ENCODE measurements at regions of chr9 and their contacts with region 1.

Region 1: GRCh38 chr9:98074115-98074990 is 17.8 kb downstream of the NANS start:
- DNase-seq: peak; percentile 63
- H3K4me3 ChIP-seq: no peak overlapping the region
- H3K27ac ChIP-seq: peak overlapping the region; percentile 14
- H3K4me1 ChIP-seq: peaks cover 17% of the 10 kb centered on the region
- CTCF ChIP-seq: peak; percentile 99

Region 2: DNA sequence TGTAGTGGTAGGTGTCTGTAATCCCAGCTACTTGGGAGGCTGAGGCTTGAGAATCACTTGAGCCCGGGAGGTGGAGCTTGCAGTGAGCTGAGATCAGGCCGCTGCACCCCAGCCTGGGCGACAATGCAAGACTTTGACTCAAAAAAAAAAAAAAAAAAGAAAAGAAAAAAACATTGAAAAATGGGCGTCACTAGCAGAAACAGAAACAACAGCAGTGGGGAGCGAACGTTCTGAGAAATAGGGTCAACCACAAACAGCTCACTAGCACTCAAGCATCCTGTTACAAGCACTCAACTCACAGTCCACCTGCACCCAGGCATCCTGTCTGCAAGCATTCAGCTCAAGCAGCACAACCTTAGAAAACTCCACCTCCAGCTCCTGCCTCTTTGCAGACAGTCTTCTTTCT is 27.5 kb after region 1 on chr9:
- CTCF ChIA-PET with region 1: no interaction called
- POLR2A ChIA-PET with region 1: interaction called, 3 read pairs
- intact Hi-C with region 1: loop called (anchors 2 kb)
- DNase-seq: peak; percentile 97
- H3K4me3 ChIP-seq: peak overlapping the region; percentile 59
- H3K27ac ChIP-seq: peak overlapping the region; percentile 95
- H3K4me1 ChIP-seq: peaks cover 98% of the 10 kb centered on the region
- CTCF ChIP-seq: no peak

Region 3: DNA sequence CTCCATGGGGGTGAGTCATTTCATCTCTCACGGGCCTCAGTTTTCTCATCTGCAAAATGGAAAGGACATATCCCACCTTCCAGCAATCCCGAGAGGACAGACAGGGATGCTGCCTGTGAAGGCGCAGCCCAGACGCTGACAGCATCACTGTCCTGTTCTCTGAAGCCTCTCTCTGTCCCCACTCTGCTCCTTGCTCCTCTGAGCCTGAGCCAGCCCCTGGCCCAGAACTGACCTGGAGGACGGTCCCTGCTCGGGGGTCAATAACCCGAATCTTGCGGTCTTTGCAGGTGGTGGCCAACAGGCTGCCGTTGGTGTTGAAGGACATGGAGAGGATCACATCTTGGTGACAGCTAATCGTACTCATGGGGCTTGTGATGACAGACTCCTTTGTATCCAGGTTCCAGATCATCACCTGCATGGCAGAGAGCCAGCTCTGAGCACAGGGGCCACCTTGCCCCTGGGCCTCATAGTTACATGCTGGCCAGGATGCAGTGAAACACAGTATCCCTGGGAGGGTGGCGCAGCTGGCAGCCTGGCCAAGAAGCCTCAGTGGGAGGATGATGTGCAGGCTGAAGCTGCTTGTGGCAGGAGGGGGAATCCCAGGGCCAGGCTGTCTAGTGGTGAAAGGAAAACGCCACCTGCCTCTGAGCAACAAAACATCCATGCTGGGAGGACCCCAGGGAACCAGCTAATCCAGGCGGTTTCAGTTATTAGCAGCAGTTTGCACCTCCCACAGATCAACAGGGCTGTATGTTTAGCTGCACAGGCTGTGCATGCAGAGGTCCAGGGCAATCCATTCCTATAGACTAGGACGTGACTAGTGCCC is 58.7 kb after region 1 on chr9:
- CTCF ChIA-PET with region 1: no interaction called
- POLR2A ChIA-PET with region 1: interaction called, 4 read pairs
- intact Hi-C with region 1: loop called (anchors 5 kb)
- DNase-seq: peak; percentile 38
- H3K4me3 ChIP-seq: no peak overlapping the region
- H3K27ac ChIP-seq: no peak overlapping the region
- H3K4me1 ChIP-seq: peaks cover 23% of the 10 kb centered on the region
- CTCF ChIP-seq: peak; percentile 37

Region 4: GRCh38 chr9:98192503-98193335 is 118.4 kb after region 1 on chr9 and contains the start of gene CORO2A:
- CTCF ChIA-PET with region 1: no interaction called
- POLR2A ChIA-PET with region 1: interaction called, 5 read pairs
- intact Hi-C with region 1: loop called (anchors 2 kb)
- DNase-seq: peak; percentile 69
- H3K4me3 ChIP-seq: peak within 1 kb of the TSS; percentile 74
- H3K27ac ChIP-seq: no peak within 1 kb of the TSS
- H3K4me1 ChIP-seq: peaks cover 16% of the 10 kb centered on the region
- CTCF ChIP-seq: peak; percentile 70
- total RNA-seq, gene CORO2A: 1.8 and 2.2 TPM in 2 replicates

Region 5: DNA sequence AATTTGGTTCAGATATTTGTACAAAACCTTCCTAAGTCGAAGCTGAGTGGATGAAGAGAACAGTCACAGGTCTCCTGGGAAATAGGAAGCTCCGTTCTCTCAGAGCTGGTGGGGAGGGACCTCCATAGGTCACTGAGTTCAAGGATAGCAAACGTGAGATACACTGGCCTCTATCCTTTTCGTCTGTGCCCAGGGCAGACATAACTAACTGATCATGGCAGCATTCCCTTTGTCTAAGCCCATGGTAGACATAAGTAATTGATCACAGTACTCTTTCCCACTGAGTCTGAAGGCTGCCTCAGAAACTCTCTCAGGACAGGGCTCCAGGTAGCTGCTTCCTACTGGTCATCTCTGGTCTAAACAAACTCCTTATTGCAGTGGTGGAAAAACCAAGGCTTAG is 130.3 kb after region 1 on chr9:
- CTCF ChIA-PET with region 1: no interaction called
- POLR2A ChIA-PET with region 1: no interaction called
- intact Hi-C with region 1: loop called (anchors 2 kb)
- DNase-seq: no peak
- H3K4me3 ChIP-seq: no peak overlapping the region
- H3K27ac ChIP-seq: no peak overlapping the region
- H3K4me1 ChIP-seq: peaks cover 21% of the 10 kb centered on the region
- CTCF ChIP-seq: no peak

Region 6: DNA sequence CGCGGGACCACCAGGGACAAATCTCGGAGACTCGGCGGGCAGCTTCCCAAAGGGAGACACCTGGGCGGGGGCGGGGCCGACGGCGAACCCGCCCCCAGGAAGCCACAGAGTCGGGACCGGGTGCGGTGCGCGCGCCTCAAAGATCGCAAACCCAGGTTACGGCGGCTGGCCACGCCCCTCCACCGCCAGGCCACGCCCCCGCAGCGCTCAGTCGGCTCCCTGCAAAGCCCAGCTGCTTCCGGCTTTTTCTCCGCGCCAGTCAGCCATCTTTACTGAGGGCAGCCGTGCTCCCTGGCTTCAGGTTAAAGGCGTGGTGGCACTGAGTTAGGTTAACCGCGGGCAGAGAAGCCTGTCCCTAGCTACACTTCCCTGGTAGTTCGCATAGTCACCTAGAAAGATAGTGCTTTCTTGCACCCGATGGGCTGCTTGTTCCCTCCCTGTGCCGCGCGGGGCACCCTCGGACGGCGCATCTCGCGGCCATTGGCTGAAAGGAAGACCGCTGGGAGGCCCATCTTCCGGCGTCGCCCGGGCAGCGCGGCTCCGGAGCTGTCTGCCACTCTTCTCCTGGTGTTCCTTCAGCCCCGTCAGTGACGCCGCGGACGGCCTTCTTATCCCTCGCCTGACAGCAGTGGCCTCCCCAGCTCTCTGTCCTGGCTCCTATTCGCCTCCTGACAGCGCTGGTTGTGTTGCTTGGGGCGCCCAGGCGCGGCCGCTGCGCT is 181.4 kb after region 1 on chr9 and contains the start of gene TBC1D2:
- CTCF ChIA-PET with region 1: interaction called, 4 read pairs
- POLR2A ChIA-PET with region 1: interaction called, 3 read pairs
- intact Hi-C with region 1: loop called (anchors 2 kb)
- DNase-seq: peak; percentile 95
- H3K4me3 ChIP-seq: peak within 1 kb of the TSS; percentile 75
- H3K27ac ChIP-seq: peak within 1 kb of the TSS; percentile 85
- H3K4me1 ChIP-seq: peaks cover 17% of the 10 kb centered on the region
- CTCF ChIP-seq: peak; percentile 51; the same call in 1 of the 2 replicates
- total RNA-seq, gene TBC1D2: 2.5 and 5.5 TPM in 2 replicates

Region 7: GRCh38 chr9:98263482-98264357 is 189.4 kb after region 1 on chr9:
- CTCF ChIA-PET with region 1: no interaction called
- POLR2A ChIA-PET with region 1: no interaction called
- intact Hi-C with region 1: loop called (anchors 1 kb)
- DNase-seq: peak; percentile 84
- H3K4me3 ChIP-seq: no peak overlapping the region
- H3K27ac ChIP-seq: no peak overlapping the region
- H3K4me1 ChIP-seq: no peaks in the 10 kb centered on the region
- CTCF ChIP-seq: peak; percentile 99

Region 8: DNA sequence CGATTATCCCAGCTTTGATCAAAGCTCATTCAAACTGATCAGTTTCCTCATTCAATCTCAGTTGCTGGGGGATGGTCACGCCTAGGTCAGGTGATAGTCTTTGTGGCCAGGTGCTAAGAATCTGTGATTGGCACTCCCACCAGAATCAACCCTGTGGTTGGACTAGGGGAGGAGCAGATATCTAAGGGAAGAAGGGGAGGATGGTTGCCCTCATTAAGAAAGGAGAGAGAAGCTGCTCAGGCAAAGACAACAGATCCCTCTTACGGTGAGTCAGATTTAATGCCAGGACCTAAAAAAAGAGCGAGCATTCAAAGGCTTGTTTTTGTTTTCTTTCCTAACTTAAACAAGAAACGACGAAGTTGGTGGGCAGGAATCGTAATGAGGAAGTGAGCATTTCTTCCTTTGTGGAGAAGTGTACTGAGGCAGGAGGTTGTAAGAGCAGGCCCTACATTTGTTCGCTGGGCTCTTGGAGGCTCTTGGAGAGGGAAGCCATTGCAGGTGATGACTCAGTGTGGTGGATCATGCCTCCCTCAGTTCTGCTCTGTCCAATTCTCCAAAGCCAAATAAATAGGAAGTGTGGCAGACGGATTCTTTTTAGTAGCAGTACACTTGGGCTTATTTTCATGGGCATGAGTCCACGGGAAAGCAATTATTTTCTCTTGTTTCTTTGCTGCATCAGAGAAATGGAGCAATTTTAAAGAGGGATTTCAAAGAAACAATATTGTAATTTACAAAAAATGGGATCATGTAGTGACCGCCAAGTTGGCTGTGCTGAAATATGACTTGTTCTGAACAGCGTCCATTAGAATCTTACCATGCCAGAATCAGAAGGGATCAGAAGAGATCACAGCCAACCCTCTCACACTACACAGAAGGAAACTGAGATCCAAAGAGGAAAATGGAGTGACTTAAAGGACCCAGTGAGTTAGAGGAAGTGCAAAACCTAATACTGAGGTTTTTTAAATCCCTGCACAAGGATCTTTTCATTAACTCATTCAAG is 1011.9 kb after region 1 on chr9:
- CTCF ChIA-PET with region 1: no interaction called
- POLR2A ChIA-PET with region 1: no interaction called
- intact Hi-C with region 1: no loop called
- DNase-seq: no peak
- H3K4me3 ChIP-seq: no peak overlapping the region
- H3K27ac ChIP-seq: no peak overlapping the region
- H3K4me1 ChIP-seq: no peaks in the 10 kb centered on the region
- CTCF ChIP-seq: no peak